A549 (cell line): ENCODE measurements at regions of chr9 and their contacts with region 1.

Region 1: DNA sequence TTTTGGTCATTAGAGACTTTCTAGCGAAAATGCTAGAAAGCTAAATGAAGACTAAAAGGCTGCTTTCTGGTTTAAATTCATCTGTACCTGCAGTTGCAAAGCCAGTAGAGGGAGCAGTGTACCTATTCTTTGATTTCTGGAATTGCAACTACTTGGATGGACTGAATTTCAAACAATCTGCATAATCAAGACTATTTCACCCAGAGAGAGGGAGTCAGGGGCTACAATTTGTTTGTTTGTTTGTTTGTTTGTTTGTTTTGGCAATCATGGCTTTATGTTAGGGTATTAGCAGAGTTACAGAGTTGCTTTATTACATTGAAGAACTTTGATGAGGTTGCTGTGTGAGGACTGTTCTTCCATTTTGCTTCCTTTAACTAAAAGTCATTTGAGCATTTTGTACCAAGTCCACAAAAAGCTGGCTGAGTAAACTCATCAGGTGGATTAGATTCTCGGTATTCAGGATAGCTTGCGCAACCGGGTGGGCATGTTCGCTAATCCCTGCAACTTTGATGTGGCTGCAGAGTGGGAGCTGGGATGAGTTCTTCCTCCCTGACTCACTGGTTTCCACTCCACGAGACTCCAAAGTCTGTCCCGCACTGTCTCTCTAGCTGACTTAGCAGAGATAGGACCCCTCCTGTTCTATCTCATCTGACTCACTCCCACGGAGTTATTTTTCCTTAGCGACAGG is 80.0 kb upstream of the TUT7 start:
- DNase-seq: peak; percentile 47 to 57
- ATAC-seq: peak; percentile 74 to 83; a peak in 5 of 6 replicates
- H3K4me3 ChIP-seq: no peak overlapping the region
- H3K27ac ChIP-seq: no peak overlapping the region
- H3K4me1 ChIP-seq: no peaks in the 10 kb centered on the region
- CTCF ChIP-seq: peak; percentile 85
- EP300 ChIP-seq: no peak
- POLR2A ChIP-seq: no peak
- RAD21 ChIP-seq: peak; percentile 81 to 86

Region 2: GRCh38 chr9:86034863-86035734 is 399.1 kb before region 1 on chr9:
- CTCF ChIA-PET with region 1: no interaction called
- POLR2A ChIA-PET with region 1: no interaction called
- DNase-seq: peak; percentile 71 to 79
- ATAC-seq: peak; percentile 89 to 93
- H3K4me3 ChIP-seq: no peak overlapping the region
- H3K27ac ChIP-seq: no peak overlapping the region
- H3K4me1 ChIP-seq: no peaks in the 10 kb centered on the region
- CTCF ChIP-seq: peak; percentile 71
- EP300 ChIP-seq: no peak
- POLR2A ChIP-seq: no peak
- RAD21 ChIP-seq: peak; percentile 67 to 80

Region 3: DNA sequence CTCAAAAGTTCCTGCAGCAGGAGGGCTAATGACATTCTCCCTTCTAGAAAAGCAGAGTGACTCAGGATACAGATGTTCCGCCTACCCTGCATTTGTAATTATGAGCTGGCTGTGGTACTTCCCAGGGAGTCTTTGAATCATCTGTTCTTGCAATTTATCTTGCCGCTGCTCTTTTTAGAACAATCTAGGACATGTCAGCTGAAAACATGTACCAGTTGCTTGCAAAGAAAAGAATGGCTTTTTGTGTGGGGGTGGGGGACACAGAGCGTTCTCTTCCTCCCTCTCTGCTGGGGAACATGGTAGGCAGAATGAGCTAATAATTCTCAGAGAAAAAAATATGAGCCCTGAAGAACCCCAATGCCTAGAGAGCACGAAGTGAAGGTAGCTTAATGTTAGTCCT is 28.3 kb before region 1 on chr9:
- CTCF ChIA-PET with region 1: interaction called, 11 read pairs
- POLR2A ChIA-PET with region 1: no interaction called
- DNase-seq: peak; percentile 45 to 59
- ATAC-seq: peak; percentile 83 to 89
- H3K4me3 ChIP-seq: peak overlapping the region; percentile 9; the same call in 1 of the 3 replicates
- H3K27ac ChIP-seq: peak overlapping the region; percentile 72 to 79
- H3K4me1 ChIP-seq: peaks cover 31% of the 10 kb centered on the region
- CTCF ChIP-seq: no peak
- EP300 ChIP-seq: no peak
- POLR2A ChIP-seq: no peak
- RAD21 ChIP-seq: 0 out of 5 replicates have a peak, but pooled peaks of 1 of the 2 experiments have one; percentile 10

Region 4: GRCh38 chr9:86413966-86414880 is 20.0 kb before region 1 on chr9:
- CTCF ChIA-PET with region 1: interaction called, 24 read pairs
- POLR2A ChIA-PET with region 1: no interaction called
- DNase-seq: peak in 1 of 2 experiments; percentile 43
- ATAC-seq: peak; percentile 76 to 83; a peak in 5 of 6 replicates
- H3K4me3 ChIP-seq: no peak overlapping the region
- H3K27ac ChIP-seq: no peak overlapping the region
- H3K4me1 ChIP-seq: no peaks in the 10 kb centered on the region
- CTCF ChIP-seq: peak; percentile 80
- EP300 ChIP-seq: no peak
- POLR2A ChIP-seq: no peak
- RAD21 ChIP-seq: peak; percentile 75 to 83

Region 5: GRCh38 chr9:86486891-86487837 is 53.0 kb after region 1 on chr9:
- CTCF ChIA-PET with region 1: interaction called, 35 read pairs
- POLR2A ChIA-PET with region 1: no interaction called
- DNase-seq: peak; percentile 44 to 55
- ATAC-seq: peak; percentile 79 to 80
- H3K4me3 ChIP-seq: no peak overlapping the region
- H3K27ac ChIP-seq: no peak overlapping the region
- H3K4me1 ChIP-seq: no peaks in the 10 kb centered on the region
- CTCF ChIP-seq: peak; percentile 66
- EP300 ChIP-seq: no peak
- POLR2A ChIP-seq: no peak
- RAD21 ChIP-seq: peak; percentile 76 to 80

Region 6: GRCh38 chr9:86600291-86600690 is 166.1 kb after region 1 on chr9:
- CTCF ChIA-PET with region 1: no interaction called
- POLR2A ChIA-PET with region 1: no interaction called
- DNase-seq: no peak
- ATAC-seq: no peak
- H3K4me3 ChIP-seq: no peak overlapping the region
- H3K27ac ChIP-seq: no peak overlapping the region
- H3K4me1 ChIP-seq: no peaks in the 10 kb centered on the region
- CTCF ChIP-seq: no peak
- EP300 ChIP-seq: no peak
- POLR2A ChIP-seq: no peak
- RAD21 ChIP-seq: no peak

Region 7: GRCh38 chr9:86674487-86674886 is 240.3 kb after region 1 on chr9:
- CTCF ChIA-PET with region 1: no interaction called
- POLR2A ChIA-PET with region 1: no interaction called
- DNase-seq: no peak
- ATAC-seq: no peak
- H3K4me3 ChIP-seq: no peak overlapping the region
- H3K27ac ChIP-seq: no peak overlapping the region
- H3K4me1 ChIP-seq: no peaks in the 10 kb centered on the region
- CTCF ChIP-seq: no peak
- EP300 ChIP-seq: no peak
- POLR2A ChIP-seq: no peak
- RAD21 ChIP-seq: no peak

Region 8: GRCh38 chr9:87324613-87325194 is 890.5 kb after region 1 on chr9:
- CTCF ChIA-PET with region 1: interaction called, 58 read pairs
- POLR2A ChIA-PET with region 1: no interaction called
- DNase-seq: peak; percentile 31 to 49
- ATAC-seq: peak; percentile 73 to 89; a peak in 5 of 6 replicates
- H3K4me3 ChIP-seq: no peak overlapping the region
- H3K27ac ChIP-seq: no peak overlapping the region
- H3K4me1 ChIP-seq: peaks cover 7% of the 10 kb centered on the region; the same call in 1 of the 3 replicates
- CTCF ChIP-seq: peak; percentile 85
- EP300 ChIP-seq: no peak
- POLR2A ChIP-seq: no peak
- RAD21 ChIP-seq: peak; percentile 91 to 93